ENCODE measurements at regions of chr2 and their contacts with region 1.

Region 1: GRCh38 chr2:231530091-231531011 is at the start of gene NMUR1:
- DNase-seq: no peak
- ATAC-seq: peak; percentile 97
- H3K4me3 ChIP-seq: peak within 1 kb of the TSS; percentile 41; the same call in 1 of the 2 replicates
- H3K27ac ChIP-seq: no peak within 1 kb of the TSS
- H3K4me1 ChIP-seq: peaks cover 5% of the 10 kb centered on the region
- H3K27me3 ChIP-seq: no peaks in the 10 kb centered on the region
- CTCF ChIP-seq: peak; percentile 71 to 85 (median 75); a peak in 5 of 6 replicates
- EP300 ChIP-seq: no peak
- POLR2A ChIP-seq: no peak
- RAD21 ChIP-seq: peak; percentile 88
- polyA plus RNA-seq, gene NMUR1: 0.02 TPM in 1 of 2 experiments, not detected in the other

Region 2: DNA sequence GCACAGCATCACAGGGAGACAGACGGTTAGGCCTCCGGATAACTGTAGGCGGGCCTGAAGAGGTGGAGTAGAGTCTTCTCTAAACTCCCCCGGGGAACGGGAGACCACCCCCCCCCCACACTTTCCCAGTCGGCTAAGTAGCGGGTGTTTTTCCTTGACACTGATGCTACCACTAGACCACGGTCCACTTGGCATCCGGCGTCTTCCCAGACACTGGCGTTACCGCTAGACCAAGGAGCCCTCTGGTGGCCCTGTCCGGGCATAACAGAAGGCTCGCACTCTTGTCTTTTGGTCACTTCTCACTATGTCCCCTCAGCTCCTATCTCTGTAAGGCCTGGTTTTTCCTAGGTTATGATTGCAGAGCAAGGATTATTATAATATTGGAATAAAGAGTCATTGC is 40.4 kb before region 1 on chr2:
- CTCF ChIA-PET with region 1: no interaction called
- POLR2A ChIA-PET with region 1: no interaction called
- RAD21 ChIA-PET with region 1: no interaction called
- SMC1A ChIA-PET with region 1: no interaction called
- in situ Hi-C with region 1: no loop called
- intact Hi-C with region 1: no loop called
- DNase-seq: no peak
- ATAC-seq: no peak
- H3K4me3 ChIP-seq: no peak overlapping the region
- H3K27ac ChIP-seq: no peak overlapping the region
- H3K4me1 ChIP-seq: peaks cover 5% of the 10 kb centered on the region; the same call in 1 of the 2 replicates
- H3K27me3 ChIP-seq: no peaks in the 10 kb centered on the region
- CTCF ChIP-seq: peak in 2 of 3 experiments; percentile 11 to 31; a peak in 1 of 6 replicates
- EP300 ChIP-seq: no peak
- POLR2A ChIP-seq: no peak
- RAD21 ChIP-seq: peak; percentile 30; the same call in 1 of the 2 replicates

Region 3: GRCh38 chr2:231545105-231545902 is 15.0 kb after region 1 on chr2:
- CTCF ChIA-PET with region 1: interaction called, 16 read pairs
- POLR2A ChIA-PET with region 1: interaction called, 7 read pairs
- RAD21 ChIA-PET with region 1: interaction called, 7 read pairs
- SMC1A ChIA-PET with region 1: interaction called, 10 read pairs
- in situ Hi-C with region 1: no loop called
- intact Hi-C with region 1: no loop called
- DNase-seq: peak; percentile 98
- ATAC-seq: peak; percentile 99
- H3K4me3 ChIP-seq: peak overlapping the region; percentile 43; the same call in 1 of the 2 replicates
- H3K27ac ChIP-seq: peak overlapping the region; percentile 97
- H3K4me1 ChIP-seq: peaks cover 30% of the 10 kb centered on the region
- H3K27me3 ChIP-seq: no peaks in the 10 kb centered on the region
- CTCF ChIP-seq: no peak
- EP300 ChIP-seq: peak; percentile 89 to 94
- POLR2A ChIP-seq: peak; percentile 96
- RAD21 ChIP-seq: no peak; the same call in 1 of the 2 replicates

Measured in GM12878 (cell line).